CD8-positive, alpha-beta T cell (primary cell): ENCODE measurements at regions of chr6 and their contacts with region 1.

Region 1: GRCh38 chr6:32984605-32985389 is 16.4 kb downstream of the BRD2 start:
- DNase-seq: peak; percentile 82 to 94 (median 91)
- ATAC-seq: peak; percentile 96
- H3K4me3 ChIP-seq: no peak overlapping the region
- H3K4me3 Mint-ChIP-seq: no peak overlapping the region
- H3K27ac ChIP-seq: peak overlapping the region in 1 of 2 experiments; percentile 44
- H3K27ac Mint-ChIP-seq: no peak overlapping the region
- H3K4me1 ChIP-seq: peaks cover 5% of the 10 kb centered on the region
- H3K4me1 Mint-ChIP-seq: peaks cover 20% of the 10 kb centered on the region
- H3K27me3 ChIP-seq: no peaks in the 10 kb centered on the region
- H3K27me3 Mint-ChIP-seq: no peaks in the 10 kb centered on the region
- CTCF ChIP-seq: peak; percentile 87

Region 2: DNA sequence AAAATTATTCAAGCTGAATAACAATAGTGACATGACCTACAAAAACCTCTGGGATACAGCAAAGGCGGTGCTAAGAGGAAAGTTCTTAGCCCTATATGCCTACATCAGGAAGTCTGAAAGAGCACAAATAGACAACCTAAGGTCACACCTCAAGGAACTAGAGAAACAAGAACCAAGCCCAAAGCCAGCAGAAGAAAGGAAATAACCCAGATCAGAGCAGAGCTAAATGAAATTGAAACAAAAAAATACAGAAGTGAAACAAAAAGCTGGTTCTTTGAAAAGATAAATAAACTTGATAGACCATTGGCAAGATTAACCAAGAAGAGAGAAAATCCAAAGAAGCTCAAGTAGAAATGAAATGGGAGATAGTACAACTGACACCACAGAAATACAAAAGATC is 713.4 kb before region 1 on chr6:
- CTCF ChIA-PET with region 1: no interaction called
- POLR2A ChIA-PET with region 1: no interaction called
- intact Hi-C with region 1: no loop called
- DNase-seq: peak in 1 of 9 experiments; percentile 49
- ATAC-seq: no peak
- H3K4me3 ChIP-seq: no peak overlapping the region
- H3K4me3 Mint-ChIP-seq: peak overlapping the region; percentile 7
- H3K27ac ChIP-seq: no peak overlapping the region
- H3K27ac Mint-ChIP-seq: peak overlapping the region; percentile 49
- H3K4me1 ChIP-seq: peaks cover 12% of the 10 kb centered on the region
- H3K4me1 Mint-ChIP-seq: peaks cover 16% of the 10 kb centered on the region
- H3K27me3 ChIP-seq: no peaks in the 10 kb centered on the region
- H3K27me3 Mint-ChIP-seq: peaks cover 5% of the 10 kb centered on the region
- CTCF ChIP-seq: no peak

Region 3: DNA sequence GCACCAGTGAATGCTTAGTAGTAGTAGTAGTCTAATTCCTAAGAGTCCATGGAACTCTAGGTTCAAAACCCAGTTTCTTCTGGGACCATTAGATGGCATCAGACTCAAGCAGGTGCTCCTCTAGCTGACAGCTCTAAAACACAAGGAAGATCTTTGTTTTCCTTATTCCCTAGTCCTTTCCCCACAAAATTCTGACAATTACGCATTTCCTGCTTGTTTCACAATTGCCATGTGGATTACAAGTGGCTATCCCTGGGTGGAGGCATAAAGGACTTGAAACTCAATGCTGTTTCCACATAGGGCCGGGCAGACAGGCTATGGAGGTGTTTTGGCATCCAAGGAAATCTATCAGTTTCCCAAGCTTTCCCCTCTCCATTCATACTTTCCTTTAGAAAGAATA is 158.8 kb before region 1 on chr6:
- CTCF ChIA-PET with region 1: interaction called, 11 read pairs
- POLR2A ChIA-PET with region 1: interaction called, 3 read pairs
- intact Hi-C with region 1: no loop called
- DNase-seq: peak in 1 of 9 experiments; percentile 39
- ATAC-seq: no peak
- H3K4me3 ChIP-seq: no peak overlapping the region
- H3K4me3 Mint-ChIP-seq: no peak overlapping the region
- H3K27ac ChIP-seq: no peak overlapping the region
- H3K27ac Mint-ChIP-seq: no peak overlapping the region
- H3K4me1 ChIP-seq: no peaks in the 10 kb centered on the region
- H3K4me1 Mint-ChIP-seq: peaks cover 2% of the 10 kb centered on the region
- H3K27me3 ChIP-seq: no peaks in the 10 kb centered on the region
- H3K27me3 Mint-ChIP-seq: no peaks in the 10 kb centered on the region
- CTCF ChIP-seq: no peak

Region 4: DNA sequence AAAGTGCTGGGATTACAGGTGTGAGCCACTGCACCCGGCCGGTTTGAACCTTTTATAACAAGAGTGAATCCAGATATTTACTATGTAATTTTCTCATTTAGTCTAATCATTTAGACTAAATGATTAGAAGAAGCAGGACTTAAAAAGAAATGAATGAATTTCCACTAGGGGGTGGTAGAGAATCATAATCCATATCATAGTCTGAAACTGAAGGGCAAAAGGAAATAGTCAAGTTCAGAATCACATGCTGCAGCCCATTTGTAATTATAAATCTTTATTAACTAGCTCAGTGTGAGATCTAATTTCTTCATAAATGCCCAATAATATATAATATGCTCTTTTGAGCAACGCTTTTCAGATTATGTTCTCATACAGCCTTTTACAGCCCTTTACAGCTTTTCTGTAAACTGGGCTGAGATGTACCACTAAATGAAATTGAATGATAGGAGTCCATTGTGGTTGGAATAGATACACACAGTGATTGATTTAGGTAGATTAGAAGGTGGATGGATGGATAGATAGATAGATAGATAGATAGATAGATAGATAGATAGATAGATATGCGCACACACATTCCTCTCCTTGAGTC is 99.0 kb before region 1 on chr6:
- CTCF ChIA-PET with region 1: interaction called, 229 read pairs
- POLR2A ChIA-PET with region 1: interaction called, 3 read pairs
- intact Hi-C with region 1: loop called (anchors 1 kb)
- DNase-seq: peak in 2 of 9 experiments; percentile 78 to 85
- ATAC-seq: peak; percentile 71
- H3K4me3 ChIP-seq: no peak overlapping the region
- H3K4me3 Mint-ChIP-seq: no peak overlapping the region
- H3K27ac ChIP-seq: no peak overlapping the region
- H3K27ac Mint-ChIP-seq: no peak overlapping the region
- H3K4me1 ChIP-seq: no peaks in the 10 kb centered on the region
- H3K4me1 Mint-ChIP-seq: no peaks in the 10 kb centered on the region
- H3K27me3 ChIP-seq: no peaks in the 10 kb centered on the region
- H3K27me3 Mint-ChIP-seq: no peaks in the 10 kb centered on the region
- CTCF ChIP-seq: peak; percentile 77

Region 5: DNA sequence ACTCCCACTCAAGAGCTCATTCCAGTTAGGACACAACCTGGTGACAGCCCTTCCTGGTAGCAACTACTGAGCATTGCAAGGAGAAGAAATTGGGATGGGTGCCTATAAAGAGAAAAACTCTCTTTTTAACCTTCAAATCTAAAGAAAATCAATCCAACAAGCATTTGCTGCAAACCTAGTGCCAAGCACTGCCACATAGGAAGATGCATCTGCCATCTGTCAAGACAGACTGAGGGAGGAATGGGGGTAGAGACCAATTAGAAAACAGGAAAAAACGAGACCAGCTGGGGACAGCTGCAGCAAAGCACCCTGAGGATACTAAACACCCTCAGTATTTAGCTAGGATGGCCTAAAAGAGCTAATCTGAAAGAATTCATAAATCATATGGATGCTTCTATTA is 71.8 kb before region 1 on chr6:
- CTCF ChIA-PET with region 1: interaction called, 21 read pairs
- POLR2A ChIA-PET with region 1: interaction called, 3 read pairs
- intact Hi-C with region 1: no loop called
- DNase-seq: no peak
- ATAC-seq: no peak
- H3K4me3 ChIP-seq: no peak overlapping the region
- H3K4me3 Mint-ChIP-seq: no peak overlapping the region
- H3K27ac ChIP-seq: no peak overlapping the region
- H3K27ac Mint-ChIP-seq: no peak overlapping the region
- H3K4me1 ChIP-seq: no peaks in the 10 kb centered on the region
- H3K4me1 Mint-ChIP-seq: no peaks in the 10 kb centered on the region
- H3K27me3 ChIP-seq: no peaks in the 10 kb centered on the region
- H3K27me3 Mint-ChIP-seq: peaks cover 15% of the 10 kb centered on the region
- CTCF ChIP-seq: no peak

Region 6: DNA sequence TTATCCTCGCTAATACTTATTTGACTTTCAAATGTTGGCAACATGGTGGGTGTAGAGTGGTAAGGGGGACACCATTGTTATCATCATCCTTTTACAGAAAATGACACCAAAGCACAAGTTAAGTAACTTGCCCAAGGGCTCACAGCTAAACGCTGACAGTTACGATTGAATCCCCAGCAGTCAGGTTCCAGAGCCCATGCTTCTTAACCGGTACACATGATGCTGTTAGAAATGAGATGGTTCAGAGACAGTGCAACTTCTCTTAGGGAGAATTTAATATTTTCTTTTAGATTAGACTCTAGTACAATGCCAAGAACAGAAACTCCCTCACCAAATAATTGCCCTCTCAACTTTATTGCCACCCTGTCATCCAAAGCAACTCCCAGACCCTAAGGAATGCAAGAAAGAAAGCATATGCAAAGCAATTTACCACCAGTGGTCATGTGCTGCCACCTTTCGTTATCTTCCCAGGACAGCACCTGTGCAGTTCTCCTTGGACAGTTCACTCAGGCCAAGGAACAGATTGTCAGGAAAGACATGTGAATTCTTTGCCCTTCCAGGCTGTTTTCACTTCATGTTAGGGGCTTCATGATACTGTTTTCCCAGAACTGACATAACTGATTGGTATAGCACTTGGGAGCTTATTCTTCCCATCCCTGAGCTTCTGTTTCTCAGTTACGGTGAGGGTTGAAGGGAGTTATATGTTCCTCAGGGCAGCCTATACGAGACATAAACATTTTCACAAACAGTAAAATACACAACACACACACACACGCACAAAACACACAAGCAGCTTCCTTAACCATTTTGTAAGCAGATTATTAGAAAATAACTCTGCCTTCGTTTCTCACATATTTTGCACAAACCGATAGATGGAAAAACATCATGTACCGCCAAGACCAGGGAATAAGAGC is 37.0 kb before region 1 on chr6:
- CTCF ChIA-PET with region 1: interaction called, 662 read pairs
- POLR2A ChIA-PET with region 1: interaction called, 18 read pairs
- intact Hi-C with region 1: loop called in 1 of 2 experiments (anchors 1 kb)
- DNase-seq: peak in 6 of 9 experiments; percentile 30 to 75 (median 56)
- ATAC-seq: no peak
- H3K4me3 ChIP-seq: no peak overlapping the region
- H3K4me3 Mint-ChIP-seq: no peak overlapping the region
- H3K27ac ChIP-seq: no peak overlapping the region
- H3K27ac Mint-ChIP-seq: no peak overlapping the region
- H3K4me1 ChIP-seq: peaks cover 49% of the 10 kb centered on the region
- H3K4me1 Mint-ChIP-seq: peaks cover 59% of the 10 kb centered on the region
- H3K27me3 ChIP-seq: no peaks in the 10 kb centered on the region
- H3K27me3 Mint-ChIP-seq: no peaks in the 10 kb centered on the region
- CTCF ChIP-seq: peak; percentile 62

Region 7: GRCh38 chr6:33000055-33000454 is 15.3 kb after region 1 on chr6:
- CTCF ChIA-PET with region 1: interaction called, 30 read pairs
- POLR2A ChIA-PET with region 1: no interaction called
- intact Hi-C with region 1: no loop called
- DNase-seq: peak in 3 of 9 experiments; percentile 40 to 65 (median 46)
- ATAC-seq: peak; percentile 44
- H3K4me3 ChIP-seq: no peak overlapping the region
- H3K4me3 Mint-ChIP-seq: no peak overlapping the region
- H3K27ac ChIP-seq: no peak overlapping the region
- H3K27ac Mint-ChIP-seq: no peak overlapping the region
- H3K4me1 ChIP-seq: peaks cover 7% of the 10 kb centered on the region
- H3K4me1 Mint-ChIP-seq: peaks cover 6% of the 10 kb centered on the region
- H3K27me3 ChIP-seq: no peaks in the 10 kb centered on the region
- H3K27me3 Mint-ChIP-seq: peaks cover 11% of the 10 kb centered on the region
- CTCF ChIP-seq: no peak

Region 8: DNA sequence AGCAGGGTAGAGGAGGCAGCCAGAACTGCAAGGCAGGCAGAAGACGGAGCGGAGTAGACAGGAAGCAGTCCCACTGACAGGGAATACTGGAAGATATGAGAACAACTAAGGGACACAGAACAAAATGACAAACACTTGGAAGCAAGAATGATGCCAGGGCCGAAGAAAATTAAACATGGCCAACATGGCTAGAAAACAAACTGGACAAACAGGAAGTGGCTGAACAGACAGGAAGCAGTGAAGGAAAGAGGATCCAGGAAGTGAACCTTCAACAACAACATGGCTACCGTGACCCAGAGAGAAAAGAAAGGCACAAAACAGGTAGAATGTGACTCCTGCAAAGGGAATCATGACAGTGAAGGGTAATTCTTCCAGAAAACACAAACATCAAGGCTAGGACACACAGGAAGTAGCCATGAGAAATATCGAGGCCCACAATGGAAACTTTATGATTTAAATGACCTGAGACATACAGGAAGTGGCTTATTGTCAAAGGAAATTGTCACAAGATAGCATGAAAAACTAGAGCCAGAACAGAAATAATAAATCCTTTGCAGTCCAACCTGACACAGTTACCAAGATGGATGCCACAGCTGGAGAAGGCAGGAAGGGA is 198.4 kb after region 1 on chr6:
- CTCF ChIA-PET with region 1: no interaction called
- POLR2A ChIA-PET with region 1: no interaction called
- intact Hi-C with region 1: no loop called
- DNase-seq: peak in 2 of 9 experiments; percentile 34 to 53
- ATAC-seq: no peak
- H3K4me3 ChIP-seq: peak overlapping the region in 1 of 2 experiments; percentile 6
- H3K4me3 Mint-ChIP-seq: peak overlapping the region; percentile 52
- H3K27ac ChIP-seq: peak overlapping the region in 1 of 2 experiments; percentile 62
- H3K27ac Mint-ChIP-seq: peak overlapping the region; percentile 90
- H3K4me1 ChIP-seq: peaks cover 19% of the 10 kb centered on the region
- H3K4me1 Mint-ChIP-seq: peaks cover 23% of the 10 kb centered on the region
- H3K27me3 ChIP-seq: peaks cover 0 to 16% of the 10 kb centered on the region in 2 experiments
- H3K27me3 Mint-ChIP-seq: peaks cover 12% of the 10 kb centered on the region
- CTCF ChIP-seq: no peak